HepG2 (cell line): ENCODE measurements at regions of chr1 and their contacts with region 1.

Region 1: GRCh38 chr1:56578963-56579875 is at the start of gene PLPP3:
- DNase-seq: peak; percentile 79
- ATAC-seq: peak; percentile 85
- H3K4me3 ChIP-seq: peak within 1 kb of the TSS; percentile 84 to 98 (median 87)
- H3K27ac ChIP-seq: peak within 1 kb of the TSS; percentile 96
- H3K4me1 ChIP-seq: peaks cover 46% of the 10 kb centered on the region
- H3K27me3 ChIP-seq: no peaks in the 10 kb centered on the region; a peak in 1 of 5 replicates
- CTCF ChIP-seq: peak; percentile 54
- EP300 ChIP-seq: peak in 1 of 2 experiments; percentile 10; a peak in 2 of 4 replicates
- POLR2A ChIP-seq: peak; percentile 86 to 95
- RAD21 ChIP-seq: peak; percentile 43; the same call in 1 of the 2 replicates
- total RNA-seq, gene PLPP3: 33.9 and 65.8 TPM in 2 replicates

Region 2: GRCh38 chr1:56189946-56190792 is 389.1 kb before region 1 on chr1:
- CTCF ChIA-PET with region 1: interaction called, 5 read pairs
- POLR2A ChIA-PET with region 1: interaction called, 14 read pairs
- in situ Hi-C with region 1: loop called (anchors 5 kb)
- intact Hi-C with region 1: loop called (anchors 2 kb)
- DNase-seq: peak; percentile 99
- ATAC-seq: peak; percentile 94
- H3K4me3 ChIP-seq: peak overlapping the region; percentile 52 to 65 (median 58); a peak in 5 of 6 replicates
- H3K27ac ChIP-seq: peak overlapping the region; percentile 91
- H3K4me1 ChIP-seq: peaks cover 47% of the 10 kb centered on the region
- H3K27me3 ChIP-seq: no peaks in the 10 kb centered on the region
- CTCF ChIP-seq: peak; percentile 86
- EP300 ChIP-seq: peak; percentile 98 to 99
- POLR2A ChIP-seq: peak in 1 of 2 experiments; percentile 94; a peak in 2 of 4 replicates
- RAD21 ChIP-seq: peak; percentile 71

Region 3: GRCh38 chr1:56330391-56331026 is 248.7 kb before region 1 on chr1:
- CTCF ChIA-PET with region 1: no interaction called
- POLR2A ChIA-PET with region 1: interaction called, 18 read pairs
- in situ Hi-C with region 1: no loop called
- intact Hi-C with region 1: no loop called
- DNase-seq: peak; percentile 47
- ATAC-seq: no peak; the same call in 2 of the 3 replicates
- H3K4me3 ChIP-seq: peak overlapping the region in 1 of 3 experiments; percentile 47; a peak in 1 of 6 replicates
- H3K27ac ChIP-seq: peak overlapping the region; percentile 85
- H3K4me1 ChIP-seq: peaks cover 39% of the 10 kb centered on the region
- H3K27me3 ChIP-seq: no peaks in the 10 kb centered on the region
- CTCF ChIP-seq: no peak
- EP300 ChIP-seq: no peak
- POLR2A ChIP-seq: no peak
- RAD21 ChIP-seq: no peak

Region 4: GRCh38 chr1:56477164-56478111 is 101.8 kb before region 1 on chr1:
- CTCF ChIA-PET with region 1: no interaction called
- POLR2A ChIA-PET with region 1: interaction called, 22 read pairs
- in situ Hi-C with region 1: no loop called
- intact Hi-C with region 1: no loop called
- DNase-seq: peak; percentile 85
- ATAC-seq: peak; percentile 90
- H3K4me3 ChIP-seq: peak overlapping the region; percentile 64 to 77 (median 68)
- H3K27ac ChIP-seq: peak overlapping the region; percentile 95
- H3K4me1 ChIP-seq: peaks cover 82% of the 10 kb centered on the region
- H3K27me3 ChIP-seq: no peaks in the 10 kb centered on the region
- CTCF ChIP-seq: no peak
- EP300 ChIP-seq: peak in 1 of 2 experiments; percentile 54; a peak in 2 of 4 replicates
- POLR2A ChIP-seq: peak; percentile 44 to 73; a peak in 2 of 4 replicates
- RAD21 ChIP-seq: no peak; the same call in none of the 2 replicates

Region 5: DNA sequence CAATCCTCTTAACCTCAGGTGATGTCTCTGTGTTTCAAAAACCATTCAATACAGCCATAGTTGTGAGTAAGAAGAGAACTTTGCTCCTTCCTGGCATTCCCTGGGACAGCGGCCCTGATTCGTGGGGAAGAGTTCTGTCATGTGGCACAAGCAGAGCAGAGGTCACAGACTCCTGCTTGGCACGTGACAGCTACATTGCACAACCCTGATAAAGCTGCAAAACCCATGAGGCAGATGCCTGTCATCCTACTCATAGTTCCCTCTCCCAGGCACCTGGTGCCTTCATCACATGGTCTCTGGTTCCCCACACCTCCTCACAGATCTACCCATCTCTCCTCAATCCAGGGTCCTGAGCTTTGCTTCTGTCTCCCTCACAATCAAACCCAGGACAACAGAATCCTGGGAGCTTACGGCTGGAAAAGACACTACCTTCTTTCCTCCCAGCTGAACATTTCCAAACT is 70.7 kb before region 1 on chr1:
- CTCF ChIA-PET with region 1: no interaction called
- POLR2A ChIA-PET with region 1: interaction called, 64 read pairs
- in situ Hi-C with region 1: loop called (anchors 5 kb)
- intact Hi-C with region 1: loop called (anchors 1 kb)
- DNase-seq: peak; percentile 98
- ATAC-seq: peak; percentile 91
- H3K4me3 ChIP-seq: no peak overlapping the region
- H3K27ac ChIP-seq: peak overlapping the region; percentile 93
- H3K4me1 ChIP-seq: peaks cover 89% of the 10 kb centered on the region
- H3K27me3 ChIP-seq: no peaks in the 10 kb centered on the region
- CTCF ChIP-seq: peak; percentile 20; the same call in 1 of the 2 replicates
- EP300 ChIP-seq: peak; percentile 60 to 95; a peak in 3 of 4 replicates
- POLR2A ChIP-seq: peak in 1 of 2 experiments; percentile 43; a peak in 1 of 4 replicates
- RAD21 ChIP-seq: peak; percentile 74

Region 6: DNA sequence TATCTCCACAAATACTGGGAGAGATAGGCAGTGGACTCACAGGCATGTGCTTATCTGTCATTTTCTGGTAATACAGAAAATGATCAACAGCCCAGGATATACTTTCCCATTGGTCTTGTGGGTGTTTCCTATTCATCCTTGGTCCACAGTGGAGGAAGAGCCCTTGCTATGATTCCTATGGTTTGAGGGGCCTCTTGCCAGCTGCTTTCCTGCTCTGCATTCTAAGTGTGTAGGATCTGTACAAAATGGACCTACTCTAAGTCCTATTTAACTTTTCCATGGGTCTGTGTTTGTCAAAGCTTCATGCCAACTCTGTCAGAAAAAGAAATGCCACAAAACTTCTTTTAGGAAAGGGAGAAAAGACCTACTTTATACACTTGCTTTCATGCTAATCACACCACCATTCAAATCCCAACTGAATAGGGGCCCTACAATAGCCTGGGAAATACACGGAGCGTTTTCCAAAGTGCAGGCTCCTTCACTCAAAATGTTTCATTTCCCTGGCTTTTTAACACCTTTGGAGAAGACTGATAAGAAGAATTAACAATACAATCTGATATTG is 16.2 kb before region 1 on chr1:
- CTCF ChIA-PET with region 1: no interaction called
- POLR2A ChIA-PET with region 1: interaction called, 30 read pairs
- in situ Hi-C with region 1: no loop called
- intact Hi-C with region 1: no loop called
- DNase-seq: no peak
- ATAC-seq: no peak
- H3K4me3 ChIP-seq: peak overlapping the region in 1 of 3 experiments; percentile 8; a peak in 2 of 6 replicates
- H3K27ac ChIP-seq: peak overlapping the region; percentile 73
- H3K4me1 ChIP-seq: peaks cover 98% of the 10 kb centered on the region
- H3K27me3 ChIP-seq: no peaks in the 10 kb centered on the region
- CTCF ChIP-seq: no peak
- EP300 ChIP-seq: no peak
- POLR2A ChIP-seq: no peak
- RAD21 ChIP-seq: no peak